SK-MEL-5 (cell line): ENCODE measurements at regions of chr7 and their contacts with region 1.

Region 1: GRCh38 chr7:43569424-43569823 is 13.5 kb upstream of the STK17A start:
- DNase-seq: no peak

Region 2: GRCh38 chr7:43491984-43492383 is 77.4 kb before region 1 on chr7:
- in situ Hi-C with region 1: loop called (anchors 10 kb)
- DNase-seq: no peak